ENCODE measurements at regions of chr21 and their contacts with region 1.

Region 1: DNA sequence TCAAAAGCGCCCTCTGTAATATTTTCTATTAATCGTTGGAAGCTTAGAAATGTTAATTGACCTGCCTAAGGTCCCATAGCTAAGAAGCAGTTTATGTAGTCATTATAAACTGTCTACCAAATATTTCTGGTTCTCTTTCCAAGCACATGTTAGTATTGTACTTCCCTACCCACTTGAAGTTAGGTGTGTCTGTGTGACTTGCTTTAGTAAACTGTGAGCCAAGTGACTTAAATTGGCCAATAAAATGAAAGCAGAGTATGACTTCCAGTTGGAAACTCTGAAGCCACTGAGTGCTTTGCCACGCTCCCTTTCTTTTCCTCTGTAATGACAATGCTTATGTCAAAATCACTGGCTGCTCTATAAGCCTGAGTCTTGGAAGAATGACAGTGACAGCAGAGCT is 20.6 kb upstream of the ADAMTS1 start:
- DNase-seq: no peak
- H3K4me3 ChIP-seq: no peak overlapping the region
- H3K27ac ChIP-seq: no peak overlapping the region
- H3K4me1 ChIP-seq: no peaks in the 10 kb centered on the region
- H3K27me3 ChIP-seq: no peaks in the 10 kb centered on the region
- CTCF ChIP-seq: no peak

Region 2: DNA sequence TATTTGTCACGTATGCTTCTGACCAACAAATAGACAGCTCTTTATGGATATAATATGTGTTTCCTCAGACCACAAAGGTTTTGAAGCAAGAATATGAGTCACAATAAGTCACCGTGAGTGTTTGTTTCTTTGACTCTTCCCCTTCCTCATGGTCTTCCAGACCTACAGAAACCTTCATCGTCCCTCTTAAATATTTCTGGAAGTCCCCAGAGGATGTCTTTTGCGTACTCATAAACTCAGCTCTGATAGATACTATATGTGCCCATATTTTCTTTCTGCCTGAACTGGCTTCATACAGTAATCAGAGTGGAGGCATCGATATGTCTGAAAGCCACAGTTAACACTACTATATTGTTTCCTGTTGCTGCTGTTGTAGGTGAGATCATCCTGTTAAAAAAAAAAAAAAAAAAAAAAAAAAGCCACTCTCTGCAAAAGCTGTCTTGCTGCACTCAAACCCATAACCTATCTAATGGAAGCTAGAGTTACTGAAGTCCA is 59.0 kb before region 1 on chr21:
- CTCF ChIA-PET with region 1: no interaction called
- POLR2A ChIA-PET with region 1: no interaction called
- intact Hi-C with region 1: no loop called
- DNase-seq: no peak
- H3K4me3 ChIP-seq: no peak overlapping the region
- H3K27ac ChIP-seq: no peak overlapping the region
- H3K4me1 ChIP-seq: peaks cover 13% of the 10 kb centered on the region
- H3K27me3 ChIP-seq: no peaks in the 10 kb centered on the region
- CTCF ChIP-seq: no peak

Region 3: GRCh38 chr21:28325618-28326017 is 1459.8 kb after region 1 on chr21:
- CTCF ChIA-PET with region 1: no interaction called
- POLR2A ChIA-PET with region 1: no interaction called
- intact Hi-C with region 1: loop called (anchors 5 kb)
- DNase-seq: no peak
- H3K4me3 ChIP-seq: no peak overlapping the region
- H3K27ac ChIP-seq: no peak overlapping the region
- H3K4me1 ChIP-seq: no peaks in the 10 kb centered on the region
- H3K27me3 ChIP-seq: no peaks in the 10 kb centered on the region
- CTCF ChIP-seq: no peak